Activated CD4-positive, alpha-beta memory T cell treated with anti-CD3 and anti-CD28 coated beads for 36 hours (primary cell): ENCODE measurements at regions of chr2 and their contacts with region 1.

Region 1: GRCh38 chr2:28276076-28276618 is 116.5 kb upstream of the FOSL2 start:
- DNase-seq: peak; percentile 50
- H3K4me3 Mint-ChIP-seq: no peak overlapping the region
- H3K27ac Mint-ChIP-seq: peak overlapping the region; percentile 59
- H3K4me1 Mint-ChIP-seq: peaks cover 48% of the 10 kb centered on the region
- H3K27me3 Mint-ChIP-seq: no peaks in the 10 kb centered on the region

Region 2: GRCh38 chr2:27771548-27772335 is 504.4 kb before region 1 on chr2 and contains the start of gene MRPL33:
- CTCF ChIA-PET with region 1: no interaction called
- POLR2A ChIA-PET with region 1: no interaction called
- intact Hi-C with region 1: loop called (anchors 10 kb)
- DNase-seq: peak; percentile 95
- H3K4me3 Mint-ChIP-seq: peak within 1 kb of the TSS; percentile 100
- H3K27ac Mint-ChIP-seq: peak within 1 kb of the TSS; percentile 97
- H3K4me1 Mint-ChIP-seq: peaks cover 38% of the 10 kb centered on the region
- H3K27me3 Mint-ChIP-seq: no peaks in the 10 kb centered on the region
- total RNA-seq, gene MRPL33: 83.3 to 84.2 TPM

Region 3: DNA sequence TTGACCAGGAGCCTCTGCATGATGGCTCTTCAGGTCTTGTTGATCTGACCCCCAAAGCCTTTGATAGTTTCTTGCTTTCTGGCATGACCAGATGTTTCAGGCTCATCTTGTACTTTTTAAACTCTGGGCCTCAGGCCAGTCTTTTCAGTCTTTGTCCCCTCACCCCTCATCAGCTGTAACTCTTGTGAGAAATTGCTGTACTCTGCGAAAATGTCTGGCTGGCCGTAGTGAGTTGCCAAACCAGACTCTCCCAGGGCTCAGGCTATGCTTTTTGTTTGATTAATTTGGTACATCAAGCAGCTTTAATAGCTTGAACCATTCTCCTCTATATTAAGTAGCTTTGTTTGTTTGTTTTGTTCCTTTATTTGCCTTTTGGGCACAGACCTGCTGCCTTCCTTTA is 309.7 kb before region 1 on chr2:
- CTCF ChIA-PET with region 1: no interaction called
- POLR2A ChIA-PET with region 1: no interaction called
- intact Hi-C with region 1: loop called (anchors 5 kb)
- DNase-seq: no peak
- H3K4me3 Mint-ChIP-seq: no peak overlapping the region
- H3K27ac Mint-ChIP-seq: no peak overlapping the region
- H3K4me1 Mint-ChIP-seq: peaks cover 59% of the 10 kb centered on the region
- H3K27me3 Mint-ChIP-seq: no peaks in the 10 kb centered on the region

Region 4: GRCh38 chr2:28068088-28068487 is 208.1 kb before region 1 on chr2:
- CTCF ChIA-PET with region 1: no interaction called
- POLR2A ChIA-PET with region 1: no interaction called
- intact Hi-C with region 1: loop called (anchors 10 kb)
- DNase-seq: no peak
- H3K4me3 Mint-ChIP-seq: no peak overlapping the region
- H3K27ac Mint-ChIP-seq: no peak overlapping the region
- H3K4me1 Mint-ChIP-seq: peaks cover 11% of the 10 kb centered on the region
- H3K27me3 Mint-ChIP-seq: no peaks in the 10 kb centered on the region

Region 5: GRCh38 chr2:28263690-28264089 is 12.5 kb before region 1 on chr2:
- CTCF ChIA-PET with region 1: no interaction called
- POLR2A ChIA-PET with region 1: no interaction called
- intact Hi-C with region 1: no loop called
- DNase-seq: no peak
- H3K4me3 Mint-ChIP-seq: no peak overlapping the region
- H3K27ac Mint-ChIP-seq: no peak overlapping the region
- H3K4me1 Mint-ChIP-seq: no peaks in the 10 kb centered on the region
- H3K27me3 Mint-ChIP-seq: no peaks in the 10 kb centered on the region

Region 6: DNA sequence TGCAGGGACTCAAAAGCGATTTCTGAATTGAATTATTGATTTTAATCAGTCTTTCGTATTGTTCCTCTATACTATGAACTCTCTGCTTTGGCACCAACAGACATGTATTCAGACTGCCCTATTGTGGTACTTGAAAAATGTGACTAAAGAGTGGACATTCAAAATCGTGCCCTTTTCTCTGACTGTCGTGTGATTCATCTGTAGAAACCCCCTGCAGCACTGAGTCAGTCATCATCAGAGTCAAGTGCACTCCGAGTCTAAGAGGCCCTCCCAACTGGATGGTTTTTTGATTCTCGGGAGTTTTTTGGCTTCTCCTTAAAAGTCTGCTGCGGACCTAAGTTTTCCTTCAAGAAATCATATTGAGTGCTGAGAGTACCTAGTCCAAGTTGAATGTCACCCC is 20.1 kb after region 1 on chr2:
- CTCF ChIA-PET with region 1: no interaction called
- POLR2A ChIA-PET with region 1: no interaction called
- intact Hi-C with region 1: no loop called
- DNase-seq: no peak
- H3K4me3 Mint-ChIP-seq: no peak overlapping the region
- H3K27ac Mint-ChIP-seq: no peak overlapping the region
- H3K4me1 Mint-ChIP-seq: peaks cover 12% of the 10 kb centered on the region
- H3K27me3 Mint-ChIP-seq: no peaks in the 10 kb centered on the region

Region 7: GRCh38 chr2:28321426-28321825 is 45.3 kb after region 1 on chr2:
- CTCF ChIA-PET with region 1: no interaction called
- POLR2A ChIA-PET with region 1: no interaction called
- intact Hi-C with region 1: no loop called
- DNase-seq: no peak
- H3K4me3 Mint-ChIP-seq: no peak overlapping the region
- H3K27ac Mint-ChIP-seq: no peak overlapping the region
- H3K4me1 Mint-ChIP-seq: peaks cover 7% of the 10 kb centered on the region
- H3K27me3 Mint-ChIP-seq: no peaks in the 10 kb centered on the region

Region 8: DNA sequence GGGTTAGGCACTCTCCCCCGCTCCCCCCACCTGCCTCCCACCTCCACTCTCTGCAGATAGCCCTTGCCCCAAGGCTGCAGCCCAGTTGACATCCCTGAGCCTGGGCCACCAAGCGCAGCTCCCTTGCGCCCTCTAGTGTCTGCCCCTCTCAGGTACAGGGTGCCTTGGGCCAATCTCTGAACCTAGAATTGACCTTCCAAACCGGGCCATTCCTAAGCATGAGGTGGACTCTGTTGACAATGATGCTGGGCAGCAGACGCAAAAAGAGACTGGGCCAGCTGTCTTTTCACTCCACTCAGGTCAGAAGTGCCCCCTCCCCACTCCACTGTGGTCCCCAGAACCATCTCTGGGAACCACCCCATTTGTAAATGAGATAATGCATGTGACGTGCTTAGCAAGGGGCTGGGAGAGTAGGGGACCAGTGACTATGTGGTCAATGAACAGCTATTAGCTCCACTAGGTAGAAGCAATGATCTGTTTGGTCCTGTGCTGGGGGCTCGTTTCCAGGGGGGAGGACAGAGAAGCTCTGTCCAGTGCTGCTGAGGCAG is 176.5 kb after region 1 on chr2:
- CTCF ChIA-PET with region 1: interaction called, 4 read pairs
- POLR2A ChIA-PET with region 1: interaction called, 9 read pairs
- intact Hi-C with region 1: loop called (anchors 1 kb)
- DNase-seq: peak; percentile 89
- H3K4me3 Mint-ChIP-seq: no peak overlapping the region
- H3K27ac Mint-ChIP-seq: peak overlapping the region; percentile 59
- H3K4me1 Mint-ChIP-seq: peaks cover 45% of the 10 kb centered on the region
- H3K27me3 Mint-ChIP-seq: no peaks in the 10 kb centered on the region